Adrenal gland (tissue), 19 donors: ENCODE measurements at regions of chr5 and their contacts with region 1.

Region 1: DNA sequence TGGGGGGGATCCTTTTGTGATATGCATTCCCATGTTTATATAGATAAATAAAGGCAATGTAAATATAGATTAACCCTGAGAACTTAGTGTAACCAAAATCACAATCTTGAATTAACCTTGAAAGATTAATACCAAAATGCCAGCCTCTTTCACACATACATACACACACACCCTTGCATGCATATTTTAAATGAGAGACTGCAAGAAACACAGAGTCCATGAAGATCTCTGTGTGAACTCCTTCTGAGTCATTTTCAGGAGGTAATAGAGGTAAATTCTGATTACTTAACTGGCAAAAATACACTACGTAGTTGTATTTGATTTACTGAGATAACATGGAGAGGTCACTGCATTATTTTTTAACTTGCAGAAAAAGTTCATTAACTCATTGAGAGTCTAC is 118.0 kb downstream of the SLF1 start:
- DNase-seq: no peak
- H3K4me3 ChIP-seq: no peak overlapping the region
- H3K27ac ChIP-seq: no peak overlapping the region
- H3K4me1 ChIP-seq: no peaks in the 10 kb centered on the region
- H3K27me3 ChIP-seq: no peaks in the 10 kb centered on the region
- CTCF ChIP-seq: no peak
- POLR2A ChIP-seq: no peak

Region 2: DNA sequence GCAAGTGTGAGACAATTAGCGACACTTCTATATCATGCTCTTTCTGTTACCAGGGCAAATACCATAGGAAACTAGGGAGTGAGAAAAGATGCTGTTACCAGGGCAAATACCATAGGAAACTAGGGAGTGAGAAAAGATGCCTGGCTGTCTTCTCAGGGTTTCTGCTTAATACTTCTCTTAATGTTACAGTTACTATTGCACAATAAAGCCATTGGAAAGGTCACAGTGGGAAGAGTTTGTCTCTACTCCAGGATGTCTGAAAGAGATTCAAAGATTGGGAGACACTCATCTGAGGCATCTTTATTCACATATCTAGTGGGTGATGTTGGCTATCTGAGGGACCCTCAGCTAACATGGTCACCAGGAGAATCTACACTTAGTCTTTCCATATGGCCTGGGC is 563.4 kb before region 1 on chr5:
- intact Hi-C with region 1: no loop called
- DNase-seq: no peak
- H3K4me3 ChIP-seq: no peak overlapping the region
- H3K27ac ChIP-seq: no peak overlapping the region
- H3K4me1 ChIP-seq: no peaks in the 10 kb centered on the region
- H3K27me3 ChIP-seq: no peaks in the 10 kb centered on the region
- CTCF ChIP-seq: no peak
- POLR2A ChIP-seq: no peak

Region 3: GRCh38 chr5:94524841-94525697 is 211.4 kb before region 1 on chr5:
- intact Hi-C with region 1: loop called in 1 of 2 experiments (anchors 5 kb)
- DNase-seq: peak in 1 of 7 donors; percentile 30
- H3K4me3 ChIP-seq: no peak overlapping the region
- H3K27ac ChIP-seq: no peak overlapping the region
- H3K4me1 ChIP-seq: no peaks in the 10 kb centered on the region
- H3K27me3 ChIP-seq: no peaks in the 10 kb centered on the region
- CTCF ChIP-seq: peak; percentile 27 to 63 (median 56)
- POLR2A ChIP-seq: no peak